ENCODE measurements at regions of chr3 and their contacts with region 1.

Region 1: GRCh38 chr3:124941771-124942170 is 7.2 kb upstream of the MUC13 start:
- DNase-seq: no peak
- ATAC-seq: no peak
- H3K4me3 ChIP-seq: no peak overlapping the region
- H3K27ac ChIP-seq: no peak overlapping the region
- H3K4me1 ChIP-seq: no peaks in the 10 kb centered on the region
- H3K27me3 ChIP-seq: no peaks in the 10 kb centered on the region
- CTCF ChIP-seq: no peak

Region 2: DNA sequence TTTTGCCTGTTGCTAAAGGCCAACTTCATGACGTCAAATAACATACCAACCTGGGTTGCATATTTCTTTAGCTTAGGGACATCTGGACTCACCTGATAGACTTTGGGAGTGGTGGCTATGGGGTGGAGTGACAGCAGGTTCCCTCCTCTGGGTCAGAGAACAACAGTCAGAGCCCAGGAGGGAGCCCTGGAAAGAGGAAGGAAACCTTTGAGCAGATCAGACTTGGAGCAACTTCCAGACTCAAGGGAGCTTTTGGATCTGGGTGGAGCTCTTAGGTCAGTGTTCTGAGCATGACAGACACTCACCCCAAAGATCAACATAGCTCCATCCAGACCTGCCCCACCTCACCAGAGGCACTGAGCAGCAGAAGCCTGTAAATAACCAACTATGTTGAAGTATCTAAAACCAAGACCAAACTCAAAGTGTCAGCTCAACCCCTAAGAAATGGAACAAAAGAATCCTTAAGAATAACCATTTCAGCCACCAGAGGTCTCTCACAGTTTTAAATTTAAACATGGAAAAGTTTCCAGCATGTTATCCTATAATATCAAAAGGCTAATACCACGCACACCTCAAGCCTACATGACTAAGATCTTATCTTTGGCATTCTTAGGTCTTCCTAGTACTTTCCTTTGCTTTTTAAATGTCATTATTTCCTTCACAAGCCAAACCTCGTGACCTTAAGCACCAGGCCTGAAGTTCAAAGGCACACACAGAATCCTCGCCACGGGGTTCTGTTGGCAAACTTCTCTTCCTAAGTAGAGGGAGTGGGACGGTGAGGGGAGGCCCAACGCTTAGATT is 155.1 kb before region 1 on chr3:
- CTCF ChIA-PET with region 1: no interaction called
- POLR2A ChIA-PET with region 1: no interaction called
- in situ Hi-C with region 1: no loop called
- intact Hi-C with region 1: no loop called
- DNase-seq: no peak
- ATAC-seq: peak; percentile 32
- H3K4me3 ChIP-seq: no peak overlapping the region
- H3K27ac ChIP-seq: peak overlapping the region; percentile 51
- H3K4me1 ChIP-seq: peaks cover 11% of the 10 kb centered on the region
- H3K27me3 ChIP-seq: no peaks in the 10 kb centered on the region
- CTCF ChIP-seq: no peak

Region 3: GRCh38 chr3:125141596-125142419 is 200.0 kb after region 1 on chr3:
- CTCF ChIA-PET with region 1: no interaction called
- POLR2A ChIA-PET with region 1: no interaction called
- in situ Hi-C with region 1: no loop called
- intact Hi-C with region 1: no loop called
- DNase-seq: no peak
- ATAC-seq: no peak
- H3K4me3 ChIP-seq: no peak overlapping the region
- H3K27ac ChIP-seq: 0 out of 2 replicates have a peak overlapping the region, but pooled peaks have one; percentile 60
- H3K4me1 ChIP-seq: peaks cover 9% of the 10 kb centered on the region
- H3K27me3 ChIP-seq: no peaks in the 10 kb centered on the region
- CTCF ChIP-seq: no peak

Region 4: GRCh38 chr3:125186261-125186787 is 244.6 kb after region 1 on chr3:
- CTCF ChIA-PET with region 1: no interaction called
- POLR2A ChIA-PET with region 1: no interaction called
- in situ Hi-C with region 1: no loop called
- intact Hi-C with region 1: no loop called
- DNase-seq: no peak
- ATAC-seq: no peak
- H3K4me3 ChIP-seq: no peak overlapping the region
- H3K27ac ChIP-seq: no peak overlapping the region
- H3K4me1 ChIP-seq: no peaks in the 10 kb centered on the region
- H3K27me3 ChIP-seq: no peaks in the 10 kb centered on the region
- CTCF ChIP-seq: no peak

Region 5: DNA sequence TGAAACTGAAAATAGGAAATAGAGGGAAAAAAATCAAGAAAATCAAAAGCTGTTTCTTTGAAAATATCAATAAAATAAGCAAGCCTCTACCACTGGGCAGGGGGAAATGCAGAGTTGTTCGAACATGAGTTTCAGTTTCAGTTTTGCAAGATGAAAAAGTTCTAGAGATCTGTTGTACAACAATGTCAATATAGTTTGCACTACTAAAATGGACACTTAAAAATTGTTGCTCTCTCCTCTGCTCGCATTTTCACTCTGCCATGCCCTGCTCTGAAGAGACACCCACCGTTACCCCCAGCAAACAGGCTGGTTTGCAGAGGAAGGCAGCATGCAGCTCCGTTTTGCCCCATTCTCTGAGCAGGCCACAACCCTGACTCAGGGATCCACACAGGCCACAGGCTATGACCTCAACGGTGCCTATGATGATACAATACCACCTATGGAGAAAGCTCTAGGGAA is 368.9 kb after region 1 on chr3:
- CTCF ChIA-PET with region 1: no interaction called
- POLR2A ChIA-PET with region 1: interaction called, 15 read pairs
- in situ Hi-C with region 1: no loop called
- intact Hi-C with region 1: no loop called
- DNase-seq: no peak
- ATAC-seq: peak; percentile 88
- H3K4me3 ChIP-seq: peak overlapping the region in 1 of 2 experiments; percentile 5; a peak in 1 of 4 replicates
- H3K27ac ChIP-seq: 0 out of 2 replicates have a peak overlapping the region, but pooled peaks have one; percentile 14
- H3K4me1 ChIP-seq: no peaks in the 10 kb centered on the region
- H3K27me3 ChIP-seq: no peaks in the 10 kb centered on the region
- CTCF ChIP-seq: no peak